Activated CD4-positive, alpha-beta T cell treated with anti-CD3 and anti-CD28 coated beads, Interleukin-2, amount 10 ng/mL, durations not matched to agents 7 days and 5 days (primary cell): ENCODE measurements at regions of chr19 and their contacts with region 1.

Region 1: GRCh38 chr19:6639439-6639838 is 30.5 kb downstream of the TNFSF14 start:
- DNase-seq: peak; percentile 41
- H3K4me3 Mint-ChIP-seq: peak overlapping the region; percentile 27
- H3K27ac Mint-ChIP-seq: peak overlapping the region; percentile 58
- H3K4me1 Mint-ChIP-seq: peaks cover 48% of the 10 kb centered on the region
- H3K27me3 Mint-ChIP-seq: no peaks in the 10 kb centered on the region

Region 2: GRCh38 chr19:6651965-6652804 is 12.7 kb after region 1 on chr19:
- CTCF ChIA-PET with region 1: interaction called, 17 read pairs
- POLR2A ChIA-PET with region 1: no interaction called
- DNase-seq: no peak
- H3K4me3 Mint-ChIP-seq: no peak overlapping the region
- H3K27ac Mint-ChIP-seq: peak overlapping the region; percentile 75
- H3K4me1 Mint-ChIP-seq: peaks cover 58% of the 10 kb centered on the region
- H3K27me3 Mint-ChIP-seq: no peaks in the 10 kb centered on the region

Region 3: DNA sequence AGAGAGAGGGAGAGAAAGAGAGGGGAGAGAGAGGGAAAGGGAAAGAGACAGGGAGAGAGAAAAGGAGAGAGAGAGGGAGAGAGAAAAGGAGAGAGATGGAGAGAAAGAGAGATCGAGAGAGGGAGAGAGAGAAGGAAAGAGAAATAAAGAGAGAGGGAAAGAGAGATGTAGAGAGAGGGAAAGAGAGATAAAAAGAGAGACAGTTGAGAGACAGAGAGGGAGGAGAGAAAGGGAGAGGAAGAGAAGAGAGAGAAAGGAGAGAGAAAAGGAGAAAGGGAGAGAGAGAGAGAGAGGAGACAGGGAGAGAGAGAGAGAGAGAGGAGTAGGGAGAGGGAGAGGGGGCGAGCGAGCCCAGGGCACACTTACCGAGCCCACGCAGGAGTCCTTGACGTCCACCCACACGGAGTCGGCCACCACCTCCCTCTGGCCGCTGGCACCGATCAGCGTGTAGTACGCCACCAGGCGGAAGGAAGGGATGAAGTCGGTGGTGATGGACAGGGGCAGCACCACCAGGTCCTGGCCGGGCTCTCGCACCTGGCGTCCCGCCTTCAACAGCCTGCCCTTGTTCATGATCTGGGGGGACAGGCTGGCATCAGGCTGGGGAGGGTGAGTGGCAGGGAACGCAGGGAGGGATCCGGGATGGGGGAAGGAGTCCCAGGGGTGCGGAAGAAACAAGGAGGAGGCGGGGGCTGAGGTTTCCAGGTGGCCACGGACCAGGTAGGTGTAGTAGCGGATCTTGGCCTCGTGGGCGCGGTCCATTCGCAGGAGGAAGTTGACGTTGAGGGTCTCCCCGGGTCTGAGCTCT is 71.0 kb after region 1 on chr19:
- CTCF ChIA-PET with region 1: no interaction called
- POLR2A ChIA-PET with region 1: no interaction called
- DNase-seq: no peak
- H3K4me3 Mint-ChIP-seq: no peak overlapping the region
- H3K27ac Mint-ChIP-seq: no peak overlapping the region
- H3K4me1 Mint-ChIP-seq: peaks cover 4% of the 10 kb centered on the region
- H3K27me3 Mint-ChIP-seq: peaks cover 39% of the 10 kb centered on the region